AG04449 (cell line): ENCODE measurements at regions of chr6 and their contacts with region 1.

Region 1: DNA sequence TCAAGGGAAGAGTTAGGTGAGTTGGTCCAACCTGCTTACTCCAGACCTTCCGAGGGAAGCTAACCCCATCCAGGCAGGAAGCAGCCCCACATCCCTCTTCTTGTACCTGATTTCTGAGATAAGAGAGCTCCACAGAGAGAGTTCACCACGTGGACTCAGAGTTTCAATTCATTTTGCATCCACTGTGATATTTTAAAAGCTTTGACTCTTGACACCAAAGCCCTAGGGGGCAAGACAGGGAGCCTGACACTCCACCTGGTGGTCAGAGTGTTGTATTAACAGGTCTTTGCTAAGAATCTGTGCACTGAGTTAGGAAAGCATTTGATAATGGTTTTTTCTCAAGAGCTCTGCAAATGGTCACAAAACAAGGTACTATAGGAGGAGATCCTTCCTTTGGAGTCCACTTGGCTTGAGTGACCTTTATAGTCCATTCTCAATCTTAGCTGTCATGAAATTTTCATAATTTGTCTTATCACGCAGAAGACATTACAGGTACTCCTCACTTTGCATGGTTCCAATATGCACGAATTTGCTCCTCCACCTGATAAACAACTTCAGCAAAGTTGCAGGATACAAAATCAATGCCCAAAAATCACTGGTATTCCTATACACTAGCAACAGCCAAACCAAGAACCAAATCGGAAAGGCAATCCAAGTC is 56.2 kb upstream of the RIPOR2 start:
- DNase-seq: no peak
- H3K4me3 ChIP-seq: no peak overlapping the region
- CTCF ChIP-seq: peak; percentile 54

Region 2: DNA sequence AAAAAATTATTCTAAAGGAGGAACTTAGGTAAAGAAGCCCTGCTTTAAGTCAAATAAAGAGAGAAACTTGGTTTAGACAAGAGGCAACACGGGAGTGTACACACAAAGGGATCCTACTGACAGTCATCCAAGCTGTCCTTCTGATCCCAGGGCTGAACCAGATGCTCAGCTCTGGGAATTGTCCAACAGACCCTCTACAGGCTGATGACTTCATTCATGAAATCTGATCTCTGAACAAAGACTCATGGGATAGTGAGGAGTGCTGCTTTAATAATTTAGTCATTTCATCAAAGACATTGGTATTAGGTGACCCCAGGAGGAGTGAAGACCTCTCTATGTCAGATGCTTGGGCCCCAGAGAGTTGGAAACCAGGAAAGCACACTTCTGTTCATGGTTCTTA is 127.6 kb before region 1 on chr6:
- CTCF ChIA-PET with region 1: interaction called, 188 read pairs
- POLR2A ChIA-PET with region 1: no interaction called
- DNase-seq: no peak
- H3K4me3 ChIP-seq: no peak overlapping the region
- CTCF ChIP-seq: no peak

Region 3: DNA sequence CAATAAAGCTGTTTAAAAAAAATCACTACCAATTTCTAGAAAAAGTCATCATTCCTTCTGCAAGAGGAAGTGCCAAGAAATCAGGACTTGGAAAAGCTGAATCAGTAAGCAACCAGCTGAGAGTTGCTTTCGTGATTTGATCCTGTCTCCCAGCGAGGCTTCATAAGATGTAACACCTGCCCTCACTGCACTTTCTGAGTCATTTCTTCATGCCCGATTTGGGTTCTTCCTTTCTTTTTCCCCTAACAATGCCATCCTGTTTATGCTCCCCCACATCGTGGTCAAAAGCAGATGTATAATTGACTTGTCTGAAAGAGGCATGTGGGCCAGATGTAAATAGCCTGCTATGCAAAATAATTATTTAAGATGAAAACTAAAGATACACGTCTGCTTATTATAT is 108.3 kb before region 1 on chr6:
- CTCF ChIA-PET with region 1: interaction called, 13 read pairs
- POLR2A ChIA-PET with region 1: no interaction called
- DNase-seq: peak; percentile 50
- H3K4me3 ChIP-seq: no peak overlapping the region
- CTCF ChIP-seq: no peak

Region 4: DNA sequence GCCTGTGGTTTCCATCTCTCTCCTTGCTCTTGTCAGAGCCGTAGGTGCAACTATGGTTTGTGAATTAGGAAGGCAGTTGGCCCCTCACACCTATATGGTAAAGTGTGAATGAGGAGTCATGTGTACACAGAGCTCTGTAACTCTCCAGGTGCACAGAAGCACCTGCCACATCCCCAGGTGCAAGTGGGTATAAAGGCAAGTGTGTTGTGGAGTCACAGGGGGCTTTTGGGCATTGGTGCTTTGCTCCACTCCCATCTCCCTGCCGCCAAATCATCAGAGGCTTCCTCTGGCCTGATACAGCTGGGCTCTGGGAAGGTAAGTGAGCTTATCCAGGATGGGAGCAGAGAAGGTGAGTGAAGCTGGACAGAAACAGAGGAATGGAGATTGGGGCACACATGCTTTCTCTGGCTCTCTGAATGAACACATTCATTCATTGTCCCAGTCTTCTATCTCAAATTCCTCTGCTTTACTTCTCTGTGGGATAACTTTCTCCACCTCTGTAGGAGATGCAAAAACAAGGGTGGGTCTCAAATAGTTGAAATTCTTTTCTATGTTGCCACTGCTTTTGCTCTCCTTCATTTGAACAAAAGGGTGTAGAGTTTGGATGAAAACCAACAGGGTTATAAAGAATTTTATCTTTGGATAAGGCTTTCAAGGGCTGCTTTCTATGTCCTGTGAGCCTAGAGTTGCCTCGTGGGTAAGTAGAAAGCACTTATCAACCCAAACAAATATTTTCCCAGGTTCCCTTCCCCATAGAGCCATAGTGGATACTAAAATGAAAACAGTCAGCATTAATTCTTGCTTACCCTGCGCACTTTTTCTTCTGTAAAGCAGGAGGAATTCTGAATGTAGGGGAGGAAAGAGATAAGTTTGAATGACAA is 11.2 kb before region 1 on chr6:
- CTCF ChIA-PET with region 1: interaction called, 31 read pairs
- POLR2A ChIA-PET with region 1: no interaction called
- DNase-seq: no peak
- H3K4me3 ChIP-seq: no peak overlapping the region
- CTCF ChIP-seq: no peak

Region 5: GRCh38 chr6:25017932-25018567 is 26.1 kb after region 1 on chr6:
- CTCF ChIA-PET with region 1: interaction called, 20 read pairs
- POLR2A ChIA-PET with region 1: no interaction called
- DNase-seq: no peak
- H3K4me3 ChIP-seq: no peak overlapping the region
- CTCF ChIP-seq: peak; percentile 30